ENCODE measurements at regions of chr7 and their contacts with region 1.

Region 1: DNA sequence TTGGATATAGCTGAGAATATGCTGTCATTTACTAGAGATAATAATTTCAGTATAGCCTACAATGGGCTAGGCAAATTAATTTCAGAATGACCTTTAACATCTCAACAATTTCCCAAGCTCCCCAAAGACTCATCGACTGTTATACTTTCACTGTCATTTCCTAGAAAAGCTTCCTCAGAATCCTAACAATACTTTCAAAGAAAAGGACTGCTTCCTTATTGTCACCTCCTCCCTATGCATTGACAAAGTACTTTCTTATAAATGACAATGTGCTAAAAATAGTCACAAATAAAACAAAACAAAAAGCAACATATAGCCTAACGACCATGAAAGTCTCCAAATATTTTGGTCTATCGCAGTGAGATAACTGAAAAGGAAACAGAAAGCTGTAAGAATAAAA is 272.6 kb downstream of the ELMO1 start:
- DNase-seq: no peak
- H3K4me3 ChIP-seq: no peak overlapping the region
- H3K27ac ChIP-seq: no peak overlapping the region
- H3K4me1 ChIP-seq: peaks cover 4% of the 10 kb centered on the region
- H3K27me3 ChIP-seq: no peaks in the 10 kb centered on the region
- CTCF ChIP-seq: no peak

Region 2: DNA sequence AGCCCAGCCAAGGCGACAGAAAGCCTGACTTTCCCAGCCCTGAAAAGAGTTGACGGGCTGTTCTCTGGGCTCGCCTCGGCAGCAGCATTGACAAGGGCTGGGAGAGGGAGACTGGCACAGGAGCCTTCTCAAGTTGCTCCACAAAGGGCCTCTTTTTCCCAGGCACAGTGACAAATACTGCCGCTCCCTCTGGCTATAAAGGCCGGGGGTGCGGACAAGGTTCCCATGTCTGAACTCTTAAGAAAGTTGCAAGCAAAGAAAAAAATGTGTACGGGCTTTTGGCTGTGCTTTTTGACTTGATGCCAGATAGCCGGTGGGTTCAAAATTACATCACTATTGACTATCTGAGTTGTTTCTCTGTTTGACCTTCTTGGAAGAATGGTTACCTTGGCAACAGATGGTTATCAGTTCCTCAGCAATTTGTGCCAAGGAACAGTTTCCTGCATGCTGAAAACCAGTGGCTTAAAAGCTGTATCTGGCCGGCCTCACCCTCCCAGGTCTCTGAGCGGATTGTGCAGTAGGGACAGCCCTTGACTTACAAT is 1138.9 kb before region 1 on chr7:
- intact Hi-C with region 1: no loop called
- DNase-seq: peak; percentile 50
- H3K4me3 ChIP-seq: peak overlapping the region; percentile 26
- H3K27ac ChIP-seq: peak overlapping the region; percentile 88
- H3K4me1 ChIP-seq: peaks cover 58% of the 10 kb centered on the region
- H3K27me3 ChIP-seq: no peaks in the 10 kb centered on the region
- CTCF ChIP-seq: no peak

Region 3: GRCh38 chr7:36986429-36987362 is 189.4 kb before region 1 on chr7:
- intact Hi-C with region 1: loop called (anchors 5 kb)
- DNase-seq: peak; percentile 45
- H3K4me3 ChIP-seq: no peak overlapping the region
- H3K27ac ChIP-seq: no peak overlapping the region
- H3K4me1 ChIP-seq: peaks cover 20% of the 10 kb centered on the region
- H3K27me3 ChIP-seq: peaks cover 23% of the 10 kb centered on the region
- CTCF ChIP-seq: peak; percentile 85

Region 4: GRCh38 chr7:37284805-37285231 is 108.7 kb after region 1 on chr7:
- intact Hi-C with region 1: no loop called
- DNase-seq: peak; percentile 38
- H3K4me3 ChIP-seq: no peak overlapping the region
- H3K27ac ChIP-seq: peak overlapping the region; percentile 60
- H3K4me1 ChIP-seq: peaks cover 75% of the 10 kb centered on the region
- H3K27me3 ChIP-seq: no peaks in the 10 kb centered on the region
- CTCF ChIP-seq: peak; percentile 83